CD4-positive, alpha-beta T cell (primary cell): ENCODE measurements at regions of chr11 and their contacts with region 1.

Region 1: DNA sequence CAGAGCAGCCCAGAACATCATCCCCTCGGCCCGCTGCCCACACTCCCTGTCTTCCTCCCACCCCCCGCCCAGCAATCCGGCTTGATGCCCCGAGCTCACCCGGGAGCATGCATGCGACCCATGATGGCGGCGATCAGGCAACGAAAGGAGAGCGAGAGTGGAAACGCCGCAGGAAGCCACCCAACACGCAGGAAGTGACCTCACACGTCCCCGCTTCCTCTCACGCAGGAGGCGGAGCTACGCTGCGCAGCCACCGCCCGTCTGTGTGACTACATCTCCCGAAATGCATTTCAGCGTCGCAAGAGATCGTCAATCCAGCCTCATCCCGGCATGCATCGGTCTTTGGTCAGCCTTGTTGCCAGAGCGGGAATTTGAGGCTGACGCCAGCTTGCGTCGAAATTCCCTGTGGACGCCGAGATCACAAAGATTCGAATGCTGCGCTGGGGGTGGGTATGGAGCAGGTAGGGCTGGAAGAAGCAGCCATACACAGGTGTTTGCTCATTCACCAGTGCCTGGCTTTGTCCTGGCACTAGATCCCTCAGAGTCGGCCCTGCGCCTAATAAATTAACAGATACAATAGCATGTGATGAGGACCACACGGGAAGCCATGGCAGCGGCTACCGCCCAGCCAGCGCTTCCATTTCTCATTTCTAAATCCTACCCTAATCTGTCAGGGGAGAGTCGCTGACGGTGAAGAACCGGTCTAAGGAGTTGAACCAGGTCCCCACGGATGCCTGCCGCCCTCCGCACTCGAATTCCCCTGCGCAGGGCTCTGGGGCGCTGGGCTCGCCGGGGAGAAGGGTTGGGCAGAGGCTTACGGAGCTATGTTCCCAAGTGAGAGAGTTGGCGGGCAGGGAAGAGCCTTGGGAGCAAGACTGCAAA is at the start of gene RPS13:
- DNase-seq: peak; percentile 88 to 99 (median 92)
- ATAC-seq: peak; percentile 92
- H3K4me3 ChIP-seq: peak within 1 kb of the TSS; percentile 94
- H3K4me3 Mint-ChIP-seq: peak within 1 kb of the TSS; percentile 92
- H3K27ac ChIP-seq: peak within 1 kb of the TSS; percentile 93 to 94
- H3K27ac Mint-ChIP-seq: peak within 1 kb of the TSS; percentile 95
- H3K4me1 ChIP-seq: peaks cover 28% of the 10 kb centered on the region
- H3K4me1 Mint-ChIP-seq: peaks cover 45% of the 10 kb centered on the region
- H3K27me3 ChIP-seq: no peaks in the 10 kb centered on the region
- H3K27me3 Mint-ChIP-seq: no peaks in the 10 kb centered on the region
- CTCF ChIP-seq: no peak
- total RNA-seq, gene RPS13: 2,215 to 2,217 TPM

Region 2: DNA sequence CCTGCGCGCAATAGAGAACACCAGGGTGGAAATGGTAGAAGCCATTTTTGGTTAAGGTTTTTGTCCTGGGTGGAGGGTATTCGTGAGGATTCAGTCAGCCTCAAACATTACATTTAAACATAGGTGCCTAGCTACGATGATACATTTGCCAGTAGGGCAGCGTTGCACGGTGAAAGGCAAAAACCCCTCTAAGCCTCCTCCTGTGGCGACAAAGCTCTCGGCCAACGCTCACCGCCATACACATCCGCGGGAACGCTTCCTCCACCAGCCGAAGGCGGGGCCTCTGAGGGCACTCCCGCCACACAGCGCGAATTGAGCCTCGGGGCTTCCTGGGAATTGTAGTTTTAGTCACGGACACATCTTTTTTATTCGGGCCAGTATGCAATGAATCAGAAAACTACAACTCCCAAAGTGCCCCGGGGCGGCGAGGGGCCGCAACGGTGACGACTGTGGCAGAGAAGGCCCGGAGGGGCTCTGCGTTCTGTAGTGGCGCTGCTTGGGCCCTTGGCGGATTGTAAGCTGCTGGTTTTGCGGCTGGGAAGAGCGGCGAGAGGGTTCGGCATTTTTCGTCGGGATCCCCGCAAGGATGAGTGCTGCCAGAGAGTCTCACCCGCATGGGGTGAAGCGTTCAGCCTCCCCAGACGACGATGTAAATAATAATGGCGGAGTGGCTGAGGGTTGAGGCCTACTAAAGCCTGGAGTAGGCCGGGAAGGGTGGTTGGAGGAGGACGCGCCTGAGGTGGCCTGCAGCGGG is 339.4 kb before region 1 on chr11 and contains the start of gene C11orf58:
- CTCF ChIA-PET with region 1: no interaction called
- POLR2A ChIA-PET with region 1: interaction called, 26 read pairs
- intact Hi-C with region 1: loop called (anchors 2 to 5 kb)
- DNase-seq: peak; percentile 89 to 99 (median 93)
- ATAC-seq: peak; percentile 94
- H3K4me3 ChIP-seq: peak within 1 kb of the TSS; percentile 78
- H3K4me3 Mint-ChIP-seq: peak within 1 kb of the TSS; percentile 73
- H3K27ac ChIP-seq: peak within 1 kb of the TSS; percentile 94 to 98
- H3K27ac Mint-ChIP-seq: no peak within 1 kb of the TSS
- H3K4me1 ChIP-seq: peaks cover 36% of the 10 kb centered on the region
- H3K4me1 Mint-ChIP-seq: peaks cover 24% of the 10 kb centered on the region
- H3K27me3 ChIP-seq: no peaks in the 10 kb centered on the region
- H3K27me3 Mint-ChIP-seq: no peaks in the 10 kb centered on the region
- CTCF ChIP-seq: no peak
- total RNA-seq, gene C11orf58: 145 to 150 TPM

Region 3: GRCh38 chr11:17354601-17354991 is 276.8 kb after region 1 on chr11:
- CTCF ChIA-PET with region 1: no interaction called
- POLR2A ChIA-PET with region 1: interaction called, 4 read pairs
- intact Hi-C with region 1: loop called in 1 of 2 experiments (anchors 10 kb)
- DNase-seq: peak; percentile 13 to 81 (median 38)
- ATAC-seq: peak; percentile 15
- H3K4me3 ChIP-seq: no peak overlapping the region
- H3K4me3 Mint-ChIP-seq: peak overlapping the region; percentile 93
- H3K27ac ChIP-seq: no peak overlapping the region
- H3K27ac Mint-ChIP-seq: peak overlapping the region; percentile 72
- H3K4me1 ChIP-seq: peaks cover 21% of the 10 kb centered on the region
- H3K4me1 Mint-ChIP-seq: peaks cover 35% of the 10 kb centered on the region
- H3K27me3 ChIP-seq: no peaks in the 10 kb centered on the region
- H3K27me3 Mint-ChIP-seq: no peaks in the 10 kb centered on the region
- CTCF ChIP-seq: peak; percentile 82

Region 4: GRCh38 chr11:17389211-17389956 is 311.6 kb after region 1 on chr11:
- CTCF ChIA-PET with region 1: no interaction called
- POLR2A ChIA-PET with region 1: interaction called, 3 read pairs
- intact Hi-C with region 1: loop called in 1 of 2 experiments (anchors 5 kb)
- DNase-seq: peak; percentile 69 to 91 (median 77)
- ATAC-seq: peak; percentile 88
- H3K4me3 ChIP-seq: peak overlapping the region; percentile 62
- H3K4me3 Mint-ChIP-seq: peak overlapping the region; percentile 93
- H3K27ac ChIP-seq: no peak overlapping the region
- H3K27ac Mint-ChIP-seq: peak overlapping the region; percentile 58
- H3K4me1 ChIP-seq: peaks cover 15% of the 10 kb centered on the region
- H3K4me1 Mint-ChIP-seq: no peaks in the 10 kb centered on the region
- H3K27me3 ChIP-seq: no peaks in the 10 kb centered on the region
- H3K27me3 Mint-ChIP-seq: no peaks in the 10 kb centered on the region
- CTCF ChIP-seq: peak; percentile 79